ENCODE measurements at regions of chr5 and their contacts with region 1.

Region 1: DNA sequence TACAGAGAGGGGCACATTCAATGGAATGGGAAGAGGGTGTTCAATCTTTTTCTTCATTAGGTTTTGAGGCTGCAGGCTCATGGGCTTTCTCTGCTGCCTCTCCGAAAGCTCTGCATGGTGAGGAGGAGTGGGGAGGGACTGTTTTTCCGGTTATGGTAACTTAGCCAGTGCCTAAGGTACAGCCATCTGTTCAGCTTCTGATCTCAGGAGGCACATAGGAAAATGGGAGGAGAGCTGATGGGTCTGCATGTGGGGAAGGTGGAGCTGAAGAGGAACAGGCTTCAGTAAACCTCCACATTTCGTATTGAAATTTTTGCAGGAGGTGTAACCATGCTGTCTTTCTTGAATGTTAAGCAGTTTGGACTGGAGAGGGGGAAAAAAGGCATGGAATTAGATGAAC is 1020.4 kb upstream of the WWC1 start:
- DNase-seq: no peak
- H3K4me3 ChIP-seq: no peak overlapping the region
- H3K27ac ChIP-seq: no peak overlapping the region
- H3K4me1 ChIP-seq: no peaks in the 10 kb centered on the region
- H3K27me3 ChIP-seq: no peaks in the 10 kb centered on the region
- CTCF ChIP-seq: no peak
- POLR2A ChIP-seq: no peak

Region 2: DNA sequence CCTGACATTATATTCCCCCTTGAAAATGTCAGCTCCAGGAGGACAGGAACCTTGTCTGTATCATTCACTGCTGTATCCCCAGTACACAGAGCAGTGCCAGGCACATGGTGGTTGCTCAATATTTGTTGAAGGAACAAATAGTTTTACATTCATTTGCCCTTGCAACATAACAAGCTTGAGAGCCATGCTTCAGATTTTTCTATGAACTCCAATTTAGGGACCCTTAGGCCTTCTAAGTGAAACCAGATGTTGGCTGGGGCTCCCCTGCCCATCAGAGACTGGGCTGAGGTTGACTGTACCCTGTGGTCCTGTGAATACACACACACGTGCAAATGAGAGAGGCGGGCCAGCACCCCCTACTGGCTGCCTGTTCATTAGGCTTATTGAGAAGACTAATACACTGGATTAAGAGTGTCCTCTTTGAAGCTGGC is 805.5 kb after region 1 on chr5:
- intact Hi-C with region 1: loop called (anchors 5 kb)
- DNase-seq: no peak
- H3K4me3 ChIP-seq: no peak overlapping the region
- H3K27ac ChIP-seq: no peak overlapping the region
- H3K4me1 ChIP-seq: no peaks in the 10 kb centered on the region
- H3K27me3 ChIP-seq: no peaks in the 10 kb centered on the region
- CTCF ChIP-seq: no peak
- POLR2A ChIP-seq: no peak